ENCODE measurements at regions of chr5 and their contacts with region 1.

Region 1: DNA sequence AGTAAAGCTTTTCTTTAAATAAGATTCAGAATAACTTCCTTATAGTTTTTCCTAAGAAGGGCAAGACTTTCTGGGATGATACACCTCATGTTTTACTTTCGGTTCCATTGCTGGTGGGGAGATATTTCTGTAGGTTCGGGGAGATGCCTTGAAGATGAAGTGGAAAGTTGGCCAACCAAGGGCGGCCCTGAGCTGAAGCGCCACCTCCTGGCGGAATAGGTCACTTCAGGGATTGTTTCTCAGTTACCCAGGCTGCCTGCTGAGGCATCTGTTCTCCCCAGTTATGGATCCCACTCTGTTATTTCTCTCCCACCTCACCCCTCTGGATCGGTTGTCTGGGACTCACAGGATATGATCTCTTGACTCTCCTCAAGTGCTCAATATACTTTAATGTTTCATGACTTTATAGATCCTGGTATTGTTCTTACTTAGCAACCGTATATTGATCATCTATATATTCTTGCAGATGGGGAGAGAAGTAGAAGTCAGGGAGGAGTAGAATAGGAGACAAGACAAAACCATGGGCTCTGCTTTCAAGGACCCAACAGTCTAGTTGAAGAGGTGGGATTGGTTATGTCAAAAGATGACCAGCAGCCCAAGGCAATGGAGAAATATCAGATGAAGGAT is 23.4 kb downstream of the MEGF10 start:
- DNase-seq: no peak
- H3K4me3 ChIP-seq: no peak overlapping the region
- H3K27me3 ChIP-seq: peaks cover 7% of the 10 kb centered on the region
- CTCF ChIP-seq: peak; percentile 88

Region 2: DNA sequence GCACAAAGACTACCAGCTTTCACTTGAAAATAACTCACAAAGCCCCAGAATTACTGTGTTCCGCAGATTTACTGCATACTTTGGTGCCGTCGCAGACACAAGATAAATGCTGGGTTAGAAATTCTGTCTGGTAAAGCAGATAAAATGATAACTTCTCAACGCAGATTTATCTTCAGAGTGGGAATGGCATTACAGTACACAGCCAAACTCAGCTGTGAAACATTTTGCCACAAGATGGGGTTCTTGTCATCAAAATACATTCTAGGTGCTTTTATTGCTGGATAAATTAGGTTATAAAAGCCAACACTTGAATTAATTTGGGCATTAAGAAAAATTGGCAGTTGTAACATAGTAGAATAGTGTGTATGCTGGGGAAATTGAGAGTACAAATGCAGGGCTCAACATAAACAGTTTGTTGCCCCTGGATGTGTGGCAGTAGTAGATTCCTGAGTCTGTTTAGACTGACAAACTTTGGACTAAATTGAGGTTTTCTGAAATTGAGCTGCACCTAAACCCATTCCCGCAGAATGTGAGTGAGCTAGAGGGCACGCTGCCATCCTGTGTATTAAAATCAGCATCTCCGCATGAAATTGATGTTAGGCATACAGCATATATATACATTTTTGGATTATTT is 475.9 kb before region 1 on chr5:
- CTCF ChIA-PET with region 1: interaction called, 14 read pairs
- POLR2A ChIA-PET with region 1: no interaction called
- DNase-seq: no peak
- H3K4me3 ChIP-seq: no peak overlapping the region
- H3K27me3 ChIP-seq: no peaks in the 10 kb centered on the region
- CTCF ChIP-seq: peak; percentile 44

Region 3: GRCh38 chr5:127521138-127521770 is 207.3 kb after region 1 on chr5:
- CTCF ChIA-PET with region 1: no interaction called
- POLR2A ChIA-PET with region 1: no interaction called
- DNase-seq: no peak
- H3K4me3 ChIP-seq: no peak overlapping the region
- H3K27me3 ChIP-seq: no peaks in the 10 kb centered on the region
- CTCF ChIP-seq: no peak

Measured in BJ (cell line).